B cell (primary cell): ENCODE measurements at regions of chr14 and their contacts with region 1.

Region 1: DNA sequence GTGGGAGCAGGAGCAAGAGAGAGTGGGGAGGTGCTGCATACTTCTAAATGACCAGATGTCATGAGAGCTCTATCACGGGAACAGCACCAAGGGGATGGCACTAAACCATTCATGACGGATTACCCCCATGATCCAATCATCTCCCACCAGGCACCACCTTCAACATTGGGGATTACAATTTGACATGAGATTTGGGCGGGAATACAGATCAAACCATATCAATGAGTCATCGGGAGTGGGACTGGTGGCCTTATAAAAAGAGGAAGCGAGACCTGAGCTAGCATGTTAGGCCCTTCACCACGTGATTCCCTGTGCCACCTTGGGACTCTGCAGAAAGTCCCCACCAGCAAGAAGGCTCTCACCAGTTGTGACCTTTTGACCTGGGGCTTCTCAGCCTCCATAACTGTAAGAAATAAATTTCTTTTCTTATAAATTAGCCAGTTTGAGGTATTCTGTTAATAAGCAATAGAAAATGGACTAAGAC is 28.7 kb downstream of the COX8C start:
- DNase-seq: peak; percentile 88
- ATAC-seq: peak; percentile 98
- H3K4me3 ChIP-seq: no peak overlapping the region
- H3K4me3 Mint-ChIP-seq: peak overlapping the region; percentile 52
- H3K27ac ChIP-seq: peak overlapping the region; percentile 66 to 75
- H3K27ac Mint-ChIP-seq: peak overlapping the region; percentile 88
- H3K4me1 ChIP-seq: peaks cover 18 to 20% of the 10 kb centered on the region in 2 donors
- H3K4me1 Mint-ChIP-seq: peaks cover 43% of the 10 kb centered on the region
- H3K27me3 ChIP-seq: no peaks in the 10 kb centered on the region
- H3K27me3 Mint-ChIP-seq: no peaks in the 10 kb centered on the region
- CTCF ChIP-seq: no peak

Region 2: GRCh38 chr14:93269341-93270068 is 106.2 kb before region 1 on chr14:
- CTCF ChIA-PET with region 1: no interaction called
- POLR2A ChIA-PET with region 1: no interaction called
- intact Hi-C with region 1: no loop called
- DNase-seq: no peak
- ATAC-seq: no peak
- H3K4me3 ChIP-seq: no peak overlapping the region
- H3K4me3 Mint-ChIP-seq: no peak overlapping the region
- H3K27ac ChIP-seq: no peak overlapping the region
- H3K27ac Mint-ChIP-seq: no peak overlapping the region
- H3K4me1 ChIP-seq: no peaks in the 10 kb centered on the region
- H3K4me1 Mint-ChIP-seq: peaks cover 1% of the 10 kb centered on the region
- H3K27me3 ChIP-seq: no peaks in the 10 kb centered on the region
- H3K27me3 Mint-ChIP-seq: no peaks in the 10 kb centered on the region
- CTCF ChIP-seq: no peak

Region 3: DNA sequence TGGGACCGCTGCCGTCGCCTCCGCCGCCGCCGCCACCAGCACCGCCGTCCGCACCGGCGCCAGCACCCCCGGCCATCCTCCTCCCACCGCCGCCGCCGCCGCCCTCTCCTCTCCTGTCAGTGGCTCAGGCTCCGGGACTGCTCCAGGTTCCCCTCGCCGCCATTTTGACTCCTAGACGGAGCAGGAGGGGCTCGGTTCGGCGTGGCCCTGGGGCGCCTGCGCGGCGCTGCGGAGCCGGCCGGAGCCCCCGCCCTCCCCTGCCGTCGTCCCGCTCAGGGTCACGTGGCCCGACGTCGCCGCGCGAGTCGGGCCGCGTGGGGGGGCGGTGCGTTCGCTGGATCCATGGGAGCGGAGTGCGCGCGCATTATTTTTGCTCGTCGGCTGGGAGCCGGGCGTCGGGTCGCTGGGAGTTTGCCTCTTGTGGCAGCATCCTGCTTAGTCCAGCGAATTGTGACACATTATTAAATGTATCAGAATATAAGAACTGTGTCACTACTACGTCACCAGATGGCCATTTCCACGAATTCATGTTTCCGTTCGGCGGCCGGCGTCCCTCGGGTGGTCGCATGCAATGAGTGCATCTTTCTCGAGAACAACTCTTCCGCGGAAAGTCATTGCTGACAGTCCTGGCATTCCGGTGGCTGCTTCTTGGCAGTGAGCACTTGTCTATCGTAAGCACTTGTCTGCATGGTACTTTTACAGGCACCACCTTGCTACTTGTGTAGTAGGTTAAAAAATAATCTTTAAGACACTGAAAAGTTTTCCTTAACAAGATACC is 42.7 kb before region 1 on chr14 and contains the start of gene BTBD7:
- CTCF ChIA-PET with region 1: no interaction called
- POLR2A ChIA-PET with region 1: no interaction called
- intact Hi-C with region 1: loop called (anchors 1 kb)
- DNase-seq: peak; percentile 96
- ATAC-seq: peak; percentile 90
- H3K4me3 ChIP-seq: peak within 1 kb of the TSS; percentile 66 to 95 (median 82)
- H3K4me3 Mint-ChIP-seq: peak within 1 kb of the TSS; percentile 92
- H3K27ac ChIP-seq: peak within 1 kb of the TSS; percentile 59 to 92
- H3K27ac Mint-ChIP-seq: peak within 1 kb of the TSS; percentile 95
- H3K4me1 ChIP-seq: peaks cover 19 to 31% of the 10 kb centered on the region in 2 donors
- H3K4me1 Mint-ChIP-seq: peaks cover 49% of the 10 kb centered on the region
- H3K27me3 ChIP-seq: no peaks in the 10 kb centered on the region
- H3K27me3 Mint-ChIP-seq: no peaks in the 10 kb centered on the region
- CTCF ChIP-seq: no peak
- total RNA-seq, gene BTBD7: 48.6 and 49.0 TPM in 2 replicates